ENCODE measurements at regions of chr12 and their contacts with region 1.

Region 1: GRCh38 chr12:27523642-27524493 is at the start of gene PPFIBP1:
- DNase-seq: peak; percentile 95
- ATAC-seq: peak; percentile 99
- H3K4me3 ChIP-seq: peak within 1 kb of the TSS; percentile 80 to 98 (median 87)
- H3K4me3 Mint-ChIP-seq: peak within 1 kb of the TSS; percentile 98
- H3K27ac ChIP-seq: peak within 1 kb of the TSS; percentile 79 to 83
- H3K27ac Mint-ChIP-seq: peak within 1 kb of the TSS; percentile 95
- H3K4me1 ChIP-seq: peaks cover 15 to 20% of the 10 kb centered on the region in 2 donors
- H3K4me1 Mint-ChIP-seq: peaks cover 28% of the 10 kb centered on the region
- H3K27me3 ChIP-seq: no peaks in the 10 kb centered on the region
- H3K27me3 Mint-ChIP-seq: peaks cover 9% of the 10 kb centered on the region
- CTCF ChIP-seq: no peak
- total RNA-seq, gene PPFIBP1: 11.1 and 15.0 TPM in 2 replicates

Region 2: GRCh38 chr12:26937875-26938700 is 585.8 kb before region 1 on chr12 and contains the starts of genes FGFR1OP2 and INTS13:
- CTCF ChIA-PET with region 1: no interaction called
- POLR2A ChIA-PET with region 1: no interaction called
- intact Hi-C with region 1: loop called (anchors 5 kb)
- DNase-seq: peak; percentile 97
- ATAC-seq: peak; percentile 91
- H3K4me3 ChIP-seq: peak within 1 kb of the TSS; percentile 72 to 100 (median 98)
- H3K4me3 Mint-ChIP-seq: peak within 1 kb of the TSS; percentile 99
- H3K27ac ChIP-seq: peak within 1 kb of the TSS; percentile 88 to 96
- H3K27ac Mint-ChIP-seq: peak within 1 kb of the TSS; percentile 99
- H3K4me1 ChIP-seq: peaks cover 18 to 57% of the 10 kb centered on the region in 2 donors
- H3K4me1 Mint-ChIP-seq: peaks cover 64% of the 10 kb centered on the region
- H3K27me3 ChIP-seq: no peaks in the 10 kb centered on the region
- H3K27me3 Mint-ChIP-seq: no peaks in the 10 kb centered on the region
- CTCF ChIP-seq: no peak
- total RNA-seq, gene FGFR1OP2: 64.3 and 67.3 TPM in 2 replicates
- total RNA-seq, gene INTS13: 15.6 and 16.2 TPM in 2 replicates

Region 3: DNA sequence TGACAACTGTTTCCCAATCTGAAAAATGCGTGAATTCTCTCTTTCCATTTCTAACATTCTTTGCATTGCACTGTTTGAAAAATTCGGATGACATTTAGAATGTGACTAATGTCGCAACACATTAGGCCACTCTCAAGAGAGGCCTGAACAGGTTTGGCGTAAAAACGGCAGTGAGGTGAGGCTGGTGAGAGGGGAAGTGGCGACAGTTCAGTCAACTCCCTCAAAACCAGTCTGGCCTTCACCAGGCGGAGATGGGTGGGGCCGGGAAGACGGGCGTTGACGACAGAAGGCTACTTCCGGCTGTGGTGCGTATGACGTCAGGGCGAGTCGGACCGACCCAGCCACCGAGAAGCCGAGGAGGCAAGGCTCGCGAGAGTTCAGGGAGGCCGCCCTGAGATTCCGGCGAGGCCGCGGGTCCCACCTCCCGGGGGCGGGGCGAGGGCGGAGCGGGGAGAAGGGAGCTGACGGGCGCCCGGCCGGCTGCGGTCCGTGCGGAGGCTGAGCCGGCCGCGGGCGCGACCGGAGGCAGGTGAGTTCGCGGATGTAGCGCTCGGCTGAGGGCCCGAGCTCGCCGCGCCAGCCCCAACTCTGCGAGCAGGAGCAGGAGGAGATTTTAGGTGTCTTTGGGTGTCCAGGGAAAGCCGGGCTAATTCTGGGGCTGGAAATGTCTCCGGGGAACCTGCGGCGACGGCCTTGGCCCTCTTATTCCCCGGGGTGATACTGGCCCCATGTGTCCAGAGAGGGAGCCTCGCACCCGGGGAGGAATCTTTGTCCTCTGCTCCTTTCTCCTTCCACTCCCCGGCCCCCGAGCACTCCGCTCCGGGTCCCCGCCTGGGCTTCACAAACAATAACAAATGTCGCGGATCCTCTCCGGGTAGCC is 279.8 kb before region 1 on chr12 and contains the start of gene STK38L:
- CTCF ChIA-PET with region 1: no interaction called
- POLR2A ChIA-PET with region 1: no interaction called
- intact Hi-C with region 1: loop called (anchors 2 kb)
- DNase-seq: peak; percentile 97
- ATAC-seq: peak; percentile 97
- H3K4me3 ChIP-seq: peak within 1 kb of the TSS; percentile 48 to 97 (median 88)
- H3K4me3 Mint-ChIP-seq: peak within 1 kb of the TSS; percentile 98
- H3K27ac ChIP-seq: peak within 1 kb of the TSS; percentile 66 to 89
- H3K27ac Mint-ChIP-seq: peak within 1 kb of the TSS; percentile 95
- H3K4me1 ChIP-seq: peaks cover 17 to 20% of the 10 kb centered on the region in 2 donors
- H3K4me1 Mint-ChIP-seq: peaks cover 38% of the 10 kb centered on the region
- H3K27me3 ChIP-seq: no peaks in the 10 kb centered on the region
- H3K27me3 Mint-ChIP-seq: no peaks in the 10 kb centered on the region
- CTCF ChIP-seq: no peak
- total RNA-seq, gene STK38L: 19.9 and 21.2 TPM in 2 replicates

Region 4: GRCh38 chr12:27534060-27534764 is 10.3 kb after region 1 on chr12:
- CTCF ChIA-PET with region 1: interaction called, 5 read pairs
- POLR2A ChIA-PET with region 1: interaction called, 4 read pairs
- intact Hi-C with region 1: loop called (anchors 1 kb)
- DNase-seq: peak; percentile 54
- ATAC-seq: peak; percentile 56
- H3K4me3 ChIP-seq: peak overlapping the region in 1 of 5 experiments; percentile 10
- H3K4me3 Mint-ChIP-seq: peak overlapping the region; percentile 36
- H3K27ac ChIP-seq: peak overlapping the region in 1 of 2 donors; percentile 53
- H3K27ac Mint-ChIP-seq: peak overlapping the region; percentile 39
- H3K4me1 ChIP-seq: peaks cover 62 to 65% of the 10 kb centered on the region in 2 donors
- H3K4me1 Mint-ChIP-seq: peaks cover 71% of the 10 kb centered on the region
- H3K27me3 ChIP-seq: no peaks in the 10 kb centered on the region
- H3K27me3 Mint-ChIP-seq: peaks cover 7% of the 10 kb centered on the region
- CTCF ChIP-seq: no peak

Region 5: GRCh38 chr12:27627123-27627835 is 103.4 kb after region 1 on chr12:
- CTCF ChIA-PET with region 1: no interaction called
- POLR2A ChIA-PET with region 1: no interaction called
- intact Hi-C with region 1: no loop called
- DNase-seq: no peak
- ATAC-seq: no peak
- H3K4me3 ChIP-seq: no peak overlapping the region
- H3K4me3 Mint-ChIP-seq: no peak overlapping the region
- H3K27ac ChIP-seq: no peak overlapping the region
- H3K27ac Mint-ChIP-seq: no peak overlapping the region
- H3K4me1 ChIP-seq: no peaks in the 10 kb centered on the region
- H3K4me1 Mint-ChIP-seq: peaks cover 3% of the 10 kb centered on the region
- H3K27me3 ChIP-seq: no peaks in the 10 kb centered on the region
- H3K27me3 Mint-ChIP-seq: no peaks in the 10 kb centered on the region
- CTCF ChIP-seq: no peak

Region 6: GRCh38 chr12:27652174-27652763 is 128.4 kb after region 1 on chr12:
- CTCF ChIA-PET with region 1: no interaction called
- POLR2A ChIA-PET with region 1: no interaction called
- intact Hi-C with region 1: loop called (anchors 5 kb)
- DNase-seq: peak; percentile 59
- ATAC-seq: no peak
- H3K4me3 ChIP-seq: no peak overlapping the region
- H3K4me3 Mint-ChIP-seq: no peak overlapping the region
- H3K27ac ChIP-seq: no peak overlapping the region
- H3K27ac Mint-ChIP-seq: no peak overlapping the region
- H3K4me1 ChIP-seq: no peaks in the 10 kb centered on the region
- H3K4me1 Mint-ChIP-seq: peaks cover 4% of the 10 kb centered on the region
- H3K27me3 ChIP-seq: no peaks in the 10 kb centered on the region
- H3K27me3 Mint-ChIP-seq: no peaks in the 10 kb centered on the region
- CTCF ChIP-seq: peak; percentile 98

Region 7: GRCh38 chr12:27710592-27711316 is 186.9 kb after region 1 on chr12 and contains the start of gene MRPS35:
- CTCF ChIA-PET with region 1: no interaction called
- POLR2A ChIA-PET with region 1: no interaction called
- intact Hi-C with region 1: loop called (anchors 1 kb)
- DNase-seq: peak; percentile 95
- ATAC-seq: peak; percentile 99
- H3K4me3 ChIP-seq: peak within 1 kb of the TSS; percentile 71 to 96 (median 92)
- H3K4me3 Mint-ChIP-seq: peak within 1 kb of the TSS; percentile 97
- H3K27ac ChIP-seq: peak within 1 kb of the TSS; percentile 68 to 80
- H3K27ac Mint-ChIP-seq: peak within 1 kb of the TSS; percentile 97
- H3K4me1 ChIP-seq: peaks cover 12 to 16% of the 10 kb centered on the region in 2 donors
- H3K4me1 Mint-ChIP-seq: peaks cover 31% of the 10 kb centered on the region
- H3K27me3 ChIP-seq: peaks cover 0 to 4% (median 0%) of the 10 kb centered on the region in 4 experiments
- H3K27me3 Mint-ChIP-seq: peaks cover 7% of the 10 kb centered on the region
- CTCF ChIP-seq: no peak
- total RNA-seq, gene MRPS35: 18.0 and 24.5 TPM in 2 replicates

Region 8: DNA sequence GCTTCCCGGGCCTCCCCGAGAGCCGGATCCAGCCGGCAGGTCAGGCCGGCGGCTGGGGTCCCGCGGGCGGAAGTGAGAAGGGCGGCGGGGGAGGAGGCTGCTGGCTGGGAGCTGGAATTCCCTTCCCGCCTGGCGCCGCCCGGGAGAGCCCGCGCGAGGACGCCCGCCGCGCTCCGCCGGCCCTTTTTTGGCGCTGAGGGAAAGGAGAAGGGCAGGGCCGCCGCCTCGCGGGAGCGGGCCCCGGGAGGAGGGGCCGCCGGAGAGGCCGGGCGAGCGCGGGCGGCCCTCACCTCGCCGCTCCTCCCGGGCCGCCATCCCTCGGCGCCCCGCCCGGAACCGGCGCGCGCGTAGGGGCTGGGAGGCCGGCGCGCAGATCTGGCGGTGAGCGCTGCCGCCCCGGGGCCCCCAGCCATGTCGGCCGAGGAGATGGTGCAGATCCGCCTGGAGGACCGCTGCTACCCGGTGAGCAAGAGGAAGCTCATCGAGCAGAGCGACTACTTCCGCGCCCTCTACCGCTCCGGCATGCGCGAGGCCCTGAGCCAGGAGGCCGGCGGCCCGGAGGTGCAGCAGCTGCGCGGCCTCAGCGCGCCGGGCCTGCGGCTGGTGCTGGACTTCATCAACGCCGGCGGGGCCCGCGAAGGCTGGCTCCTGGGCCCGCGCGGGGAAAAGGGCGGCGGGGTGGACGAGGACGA is 256.2 kb after region 1 on chr12 and contains the starts of genes KLHL42 and MANSC4:
- CTCF ChIA-PET with region 1: no interaction called
- POLR2A ChIA-PET with region 1: no interaction called
- intact Hi-C with region 1: loop called (anchors 10 kb)
- DNase-seq: peak; percentile 83
- ATAC-seq: peak; percentile 86
- H3K4me3 ChIP-seq: peak within 1 kb of the TSS; percentile 39 to 81 (median 67)
- H3K4me3 Mint-ChIP-seq: peak within 1 kb of the TSS; percentile 90
- H3K27ac ChIP-seq: peak within 1 kb of the TSS in 1 of 2 donors; percentile 69
- H3K27ac Mint-ChIP-seq: peak within 1 kb of the TSS; percentile 90
- H3K4me1 ChIP-seq: peaks cover 11 to 15% of the 10 kb centered on the region in 2 donors
- H3K4me1 Mint-ChIP-seq: peaks cover 29% of the 10 kb centered on the region
- H3K27me3 ChIP-seq: no peaks in the 10 kb centered on the region
- H3K27me3 Mint-ChIP-seq: no peaks in the 10 kb centered on the region
- CTCF ChIP-seq: no peak
- total RNA-seq, gene KLHL42: 20.5 and 21.9 TPM in 2 replicates
- total RNA-seq, gene MANSC4: not detected in 2 replicates

Measured in B cell (primary cell).